CD8-positive, alpha-beta T cell (primary cell): ENCODE measurements at regions of chr12 and their contacts with region 1.

Region 1: DNA sequence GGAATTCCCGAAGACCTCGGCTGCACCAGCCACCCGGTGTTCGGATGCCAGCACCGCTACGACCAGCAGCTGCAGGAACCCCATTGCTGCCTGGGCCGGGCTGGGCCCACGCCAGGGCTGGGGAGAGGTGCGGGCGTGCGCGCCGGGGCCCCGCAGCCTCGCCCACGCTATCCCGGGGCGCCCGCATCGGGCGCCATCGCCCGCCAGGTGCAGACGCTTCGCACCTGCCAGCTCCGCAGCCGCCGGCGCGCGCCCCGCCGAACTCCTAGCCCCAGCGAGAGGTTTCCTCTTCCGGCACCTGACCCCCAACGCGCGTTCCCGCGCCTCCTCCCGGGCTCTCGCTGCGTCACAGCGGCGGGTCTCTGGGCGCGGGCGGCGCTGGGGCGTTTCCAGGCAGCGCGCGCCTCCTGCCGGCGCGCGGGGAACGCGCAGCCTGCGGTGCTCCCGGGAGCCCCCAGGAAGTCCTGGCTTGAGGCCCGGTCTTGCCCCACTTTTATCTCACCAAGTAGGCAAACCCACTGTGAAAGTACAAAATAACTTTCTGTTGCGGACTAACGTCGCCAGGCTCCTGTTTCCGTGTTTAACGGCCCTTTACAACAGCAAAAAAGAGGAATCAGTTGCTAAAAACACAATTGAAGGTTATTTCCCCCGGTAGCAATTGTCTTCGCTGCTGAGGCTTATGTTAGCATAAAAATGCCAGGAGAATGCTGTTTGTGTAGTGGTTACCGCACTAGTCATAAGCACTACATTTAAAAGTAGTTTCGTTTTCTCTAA is at the start of gene TM7SF3:
- DNase-seq: peak; percentile 92 to 98 (median 96)
- ATAC-seq: peak; percentile 89
- H3K4me3 ChIP-seq: peak within 1 kb of the TSS; percentile 87 to 93
- H3K4me3 Mint-ChIP-seq: peak within 1 kb of the TSS; percentile 93
- H3K27ac ChIP-seq: peak within 1 kb of the TSS; percentile 80 to 98
- H3K27ac Mint-ChIP-seq: peak within 1 kb of the TSS; percentile 92
- H3K4me1 ChIP-seq: peaks cover 25% of the 10 kb centered on the region
- H3K4me1 Mint-ChIP-seq: peaks cover 51% of the 10 kb centered on the region
- H3K27me3 ChIP-seq: no peaks in the 10 kb centered on the region
- H3K27me3 Mint-ChIP-seq: no peaks in the 10 kb centered on the region
- CTCF ChIP-seq: peak; percentile 98
- total RNA-seq, gene TM7SF3: 5.8 to 7.2 TPM

Region 2: DNA sequence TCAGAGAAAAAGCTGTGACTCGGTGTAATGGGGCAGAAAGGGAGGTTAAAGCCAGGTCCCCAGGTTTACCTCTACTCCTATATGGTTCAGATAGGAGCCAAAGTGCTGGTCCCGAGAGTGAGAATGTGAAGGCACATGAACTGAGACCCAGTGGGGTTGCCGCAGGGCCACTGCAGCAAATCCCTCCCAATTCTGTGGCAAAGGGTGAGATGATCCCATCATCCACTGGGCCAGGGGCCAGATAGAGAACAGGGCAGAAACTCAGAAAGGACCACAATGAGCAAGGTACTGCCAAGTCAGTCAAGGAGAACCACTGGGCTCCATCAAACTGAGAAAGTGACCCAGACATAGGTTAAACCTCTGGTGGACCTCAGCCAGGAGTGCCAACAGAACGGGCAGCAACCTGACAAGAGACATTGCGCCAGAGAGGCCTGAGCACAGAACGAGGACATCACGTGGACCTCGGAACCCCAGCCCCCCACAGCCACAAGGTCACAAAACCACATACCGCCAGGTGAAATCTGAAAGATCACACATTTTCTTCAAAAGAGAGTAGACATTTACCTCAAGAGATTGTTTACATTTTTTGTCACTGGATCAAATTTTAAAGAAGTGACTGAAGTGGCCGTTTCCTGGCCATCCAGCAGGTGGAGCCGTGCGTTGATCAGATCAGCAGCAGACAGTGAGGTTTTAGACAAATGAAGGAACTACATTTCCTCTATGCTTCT is 160.8 kb before region 1 on chr12:
- CTCF ChIA-PET with region 1: interaction called, 6 read pairs
- POLR2A ChIA-PET with region 1: no interaction called
- intact Hi-C with region 1: loop called (anchors 1 to 2 kb)
- DNase-seq: peak; percentile 55 to 83 (median 69)
- ATAC-seq: peak; percentile 98
- H3K4me3 ChIP-seq: no peak overlapping the region
- H3K4me3 Mint-ChIP-seq: no peak overlapping the region
- H3K27ac ChIP-seq: no peak overlapping the region
- H3K27ac Mint-ChIP-seq: peak overlapping the region; percentile 33
- H3K4me1 ChIP-seq: peaks cover 6% of the 10 kb centered on the region
- H3K4me1 Mint-ChIP-seq: no peaks in the 10 kb centered on the region
- H3K27me3 ChIP-seq: no peaks in the 10 kb centered on the region
- H3K27me3 Mint-ChIP-seq: peaks cover 4% of the 10 kb centered on the region
- CTCF ChIP-seq: peak; percentile 92

Region 3: DNA sequence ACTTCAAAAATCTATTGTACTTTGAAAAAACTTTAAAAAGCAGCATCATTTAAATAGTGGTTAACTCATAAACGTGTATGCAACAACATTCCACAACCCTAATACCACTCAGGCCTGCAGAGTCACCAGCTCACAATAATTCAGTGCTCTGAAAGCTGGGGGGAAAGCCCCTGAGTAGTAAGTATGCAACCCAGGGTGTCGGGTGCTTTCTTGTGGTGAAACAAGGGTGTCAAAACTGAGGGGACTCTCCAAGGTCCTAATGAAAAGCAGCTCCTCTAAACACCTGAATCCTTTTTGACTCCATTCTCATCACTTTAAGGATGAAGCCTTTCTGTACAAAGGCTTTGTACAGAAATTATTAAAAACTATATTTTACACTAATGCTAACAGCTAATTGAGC is 42.3 kb before region 1 on chr12:
- CTCF ChIA-PET with region 1: no interaction called
- POLR2A ChIA-PET with region 1: no interaction called
- intact Hi-C with region 1: loop called in 1 of 2 experiments (anchors 5 kb)
- DNase-seq: peak; percentile 13 to 90 (median 59)
- ATAC-seq: peak; percentile 98
- H3K4me3 ChIP-seq: no peak overlapping the region
- H3K4me3 Mint-ChIP-seq: peak overlapping the region; percentile 18
- H3K27ac ChIP-seq: no peak overlapping the region
- H3K27ac Mint-ChIP-seq: peak overlapping the region; percentile 45
- H3K4me1 ChIP-seq: peaks cover 16% of the 10 kb centered on the region
- H3K4me1 Mint-ChIP-seq: peaks cover 17% of the 10 kb centered on the region
- H3K27me3 ChIP-seq: no peaks in the 10 kb centered on the region
- H3K27me3 Mint-ChIP-seq: no peaks in the 10 kb centered on the region
- CTCF ChIP-seq: no peak

Region 4: DNA sequence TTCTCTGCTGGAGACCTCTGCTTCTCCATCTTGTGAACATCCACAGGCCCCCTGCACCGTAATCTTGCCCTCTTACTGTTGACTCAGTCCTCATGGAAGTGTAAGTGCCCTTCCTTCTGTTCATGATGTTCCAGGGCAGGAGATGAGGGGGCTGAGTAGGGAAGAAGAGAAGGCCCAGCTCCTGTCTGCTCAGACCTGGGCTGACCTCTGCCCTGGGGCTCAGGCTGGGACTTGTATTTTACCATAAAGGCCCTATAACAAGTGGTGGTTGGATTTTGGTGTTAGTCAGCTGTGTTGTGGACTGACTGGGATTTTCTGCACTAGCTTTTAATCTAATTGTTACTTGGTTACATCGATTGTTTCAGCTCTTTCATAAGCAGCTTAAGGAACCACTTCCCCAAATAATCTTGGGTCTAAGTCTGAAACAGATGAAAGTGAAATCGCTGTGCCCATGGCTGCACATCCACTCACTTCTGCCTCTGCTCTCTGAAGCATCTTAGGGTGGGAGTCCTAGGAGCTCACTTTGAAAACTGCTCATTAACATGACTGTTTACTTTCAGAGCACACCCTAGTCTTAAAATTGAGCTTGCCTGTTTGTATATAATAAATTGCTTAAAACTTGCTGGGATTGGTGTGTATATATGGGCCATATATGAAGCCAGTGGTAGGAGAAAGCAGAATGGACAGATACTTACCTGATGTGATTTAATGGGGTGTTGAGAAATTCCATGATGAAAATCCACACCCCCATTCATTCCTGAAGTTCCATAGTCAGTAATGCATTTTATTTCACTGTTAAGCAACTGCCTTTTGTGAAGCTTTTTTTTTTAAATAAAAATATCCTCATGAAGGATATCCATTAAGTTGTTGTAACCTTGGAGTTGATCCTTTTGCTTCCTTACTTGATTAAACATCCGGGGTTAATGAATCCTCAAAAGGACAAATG is 50.4 kb after region 1 on chr12:
- CTCF ChIA-PET with region 1: no interaction called
- POLR2A ChIA-PET with region 1: no interaction called
- intact Hi-C with region 1: no loop called
- DNase-seq: no peak
- ATAC-seq: no peak
- H3K4me3 ChIP-seq: no peak overlapping the region
- H3K4me3 Mint-ChIP-seq: no peak overlapping the region
- H3K27ac ChIP-seq: no peak overlapping the region
- H3K27ac Mint-ChIP-seq: no peak overlapping the region
- H3K4me1 ChIP-seq: no peaks in the 10 kb centered on the region
- H3K4me1 Mint-ChIP-seq: no peaks in the 10 kb centered on the region
- H3K27me3 ChIP-seq: no peaks in the 10 kb centered on the region
- H3K27me3 Mint-ChIP-seq: no peaks in the 10 kb centered on the region
- CTCF ChIP-seq: no peak

Region 5: GRCh38 chr12:27142101-27142721 is 127.9 kb after region 1 on chr12:
- CTCF ChIA-PET with region 1: interaction called, 9 read pairs
- POLR2A ChIA-PET with region 1: no interaction called
- intact Hi-C with region 1: loop called in 1 of 2 experiments (anchors 1 kb)
- DNase-seq: peak in 7 of 9 experiments; percentile 9 to 73 (median 28)
- ATAC-seq: peak; percentile 51
- H3K4me3 ChIP-seq: no peak overlapping the region
- H3K4me3 Mint-ChIP-seq: no peak overlapping the region
- H3K27ac ChIP-seq: no peak overlapping the region
- H3K27ac Mint-ChIP-seq: no peak overlapping the region
- H3K4me1 ChIP-seq: no peaks in the 10 kb centered on the region
- H3K4me1 Mint-ChIP-seq: peaks cover 6% of the 10 kb centered on the region
- H3K27me3 ChIP-seq: no peaks in the 10 kb centered on the region
- H3K27me3 Mint-ChIP-seq: no peaks in the 10 kb centered on the region
- CTCF ChIP-seq: peak; percentile 81

Region 6: DNA sequence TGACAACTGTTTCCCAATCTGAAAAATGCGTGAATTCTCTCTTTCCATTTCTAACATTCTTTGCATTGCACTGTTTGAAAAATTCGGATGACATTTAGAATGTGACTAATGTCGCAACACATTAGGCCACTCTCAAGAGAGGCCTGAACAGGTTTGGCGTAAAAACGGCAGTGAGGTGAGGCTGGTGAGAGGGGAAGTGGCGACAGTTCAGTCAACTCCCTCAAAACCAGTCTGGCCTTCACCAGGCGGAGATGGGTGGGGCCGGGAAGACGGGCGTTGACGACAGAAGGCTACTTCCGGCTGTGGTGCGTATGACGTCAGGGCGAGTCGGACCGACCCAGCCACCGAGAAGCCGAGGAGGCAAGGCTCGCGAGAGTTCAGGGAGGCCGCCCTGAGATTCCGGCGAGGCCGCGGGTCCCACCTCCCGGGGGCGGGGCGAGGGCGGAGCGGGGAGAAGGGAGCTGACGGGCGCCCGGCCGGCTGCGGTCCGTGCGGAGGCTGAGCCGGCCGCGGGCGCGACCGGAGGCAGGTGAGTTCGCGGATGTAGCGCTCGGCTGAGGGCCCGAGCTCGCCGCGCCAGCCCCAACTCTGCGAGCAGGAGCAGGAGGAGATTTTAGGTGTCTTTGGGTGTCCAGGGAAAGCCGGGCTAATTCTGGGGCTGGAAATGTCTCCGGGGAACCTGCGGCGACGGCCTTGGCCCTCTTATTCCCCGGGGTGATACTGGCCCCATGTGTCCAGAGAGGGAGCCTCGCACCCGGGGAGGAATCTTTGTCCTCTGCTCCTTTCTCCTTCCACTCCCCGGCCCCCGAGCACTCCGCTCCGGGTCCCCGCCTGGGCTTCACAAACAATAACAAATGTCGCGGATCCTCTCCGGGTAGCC is 229.8 kb after region 1 on chr12 and contains the start of gene STK38L:
- CTCF ChIA-PET with region 1: interaction called, 3 read pairs
- POLR2A ChIA-PET with region 1: no interaction called
- intact Hi-C with region 1: loop called (anchors 1 to 2 kb)
- DNase-seq: peak; percentile 90 to 99 (median 98)
- ATAC-seq: peak; percentile 95
- H3K4me3 ChIP-seq: peak within 1 kb of the TSS; percentile 84 to 89
- H3K4me3 Mint-ChIP-seq: peak within 1 kb of the TSS; percentile 96
- H3K27ac ChIP-seq: peak within 1 kb of the TSS; percentile 76
- H3K27ac Mint-ChIP-seq: peak within 1 kb of the TSS; percentile 96
- H3K4me1 ChIP-seq: peaks cover 14% of the 10 kb centered on the region
- H3K4me1 Mint-ChIP-seq: peaks cover 52% of the 10 kb centered on the region
- H3K27me3 ChIP-seq: no peaks in the 10 kb centered on the region
- H3K27me3 Mint-ChIP-seq: no peaks in the 10 kb centered on the region
- CTCF ChIP-seq: no peak
- total RNA-seq, gene STK38L: 27.0 to 28.6 TPM

Region 7: DNA sequence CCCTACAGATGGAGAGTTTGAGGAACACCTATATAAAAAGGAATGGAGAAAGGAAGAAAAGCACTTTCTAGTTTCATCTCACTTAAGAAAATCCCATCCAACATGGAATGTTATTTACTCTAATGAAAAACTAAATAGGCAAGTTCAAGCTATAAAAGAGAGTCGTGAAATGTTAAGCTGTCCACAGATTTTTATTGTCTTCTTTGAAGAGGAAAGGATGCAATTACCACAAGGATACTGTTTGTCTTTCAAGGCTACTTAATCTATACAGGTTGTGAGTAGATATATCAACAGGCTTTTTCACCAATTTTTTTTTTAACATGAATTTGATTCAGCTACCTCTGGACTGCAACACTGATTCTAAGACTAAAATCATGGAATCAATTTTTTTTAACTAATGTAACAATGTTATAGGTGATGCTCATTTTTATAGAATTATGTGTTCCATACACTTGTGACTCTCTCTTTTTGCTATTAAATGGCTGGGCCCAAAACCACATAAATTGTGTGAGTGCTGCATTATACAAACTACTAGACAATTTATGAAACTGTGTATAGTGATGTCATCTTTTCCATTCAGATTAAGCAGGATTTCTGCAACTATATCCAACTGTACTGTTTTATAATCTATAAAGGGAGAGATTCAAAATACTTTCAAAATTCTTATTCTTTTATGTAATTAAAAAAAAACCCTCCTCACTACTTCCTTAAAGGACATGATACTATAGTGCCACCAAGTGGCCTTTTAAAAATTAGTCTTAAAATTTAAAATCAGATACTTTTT is 291.6 kb after region 1 on chr12:
- CTCF ChIA-PET with region 1: interaction called, 29 read pairs
- POLR2A ChIA-PET with region 1: interaction called, 3 read pairs
- intact Hi-C with region 1: loop called (anchors 1 kb)
- DNase-seq: peak in 2 of 9 experiments; percentile 46 to 62
- ATAC-seq: peak; percentile 34
- H3K4me3 ChIP-seq: no peak overlapping the region
- H3K4me3 Mint-ChIP-seq: no peak overlapping the region
- H3K27ac ChIP-seq: no peak overlapping the region
- H3K27ac Mint-ChIP-seq: no peak overlapping the region
- H3K4me1 ChIP-seq: no peaks in the 10 kb centered on the region
- H3K4me1 Mint-ChIP-seq: no peaks in the 10 kb centered on the region
- H3K27me3 ChIP-seq: no peaks in the 10 kb centered on the region
- H3K27me3 Mint-ChIP-seq: no peaks in the 10 kb centered on the region
- CTCF ChIP-seq: peak; percentile 89

Region 8: GRCh38 chr12:27710592-27711316 is 696.5 kb after region 1 on chr12 and contains the start of gene MRPS35:
- CTCF ChIA-PET with region 1: no interaction called
- POLR2A ChIA-PET with region 1: no interaction called
- intact Hi-C with region 1: loop called (anchors 2 to 5 kb)
- DNase-seq: peak; percentile 83 to 95 (median 90)
- ATAC-seq: peak; percentile 96
- H3K4me3 ChIP-seq: peak within 1 kb of the TSS; percentile 86 to 89
- H3K4me3 Mint-ChIP-seq: peak within 1 kb of the TSS; percentile 96
- H3K27ac ChIP-seq: peak within 1 kb of the TSS; percentile 68 to 71
- H3K27ac Mint-ChIP-seq: peak within 1 kb of the TSS; percentile 95
- H3K4me1 ChIP-seq: peaks cover 11% of the 10 kb centered on the region
- H3K4me1 Mint-ChIP-seq: peaks cover 36% of the 10 kb centered on the region
- H3K27me3 ChIP-seq: no peaks in the 10 kb centered on the region
- H3K27me3 Mint-ChIP-seq: peaks cover 6% of the 10 kb centered on the region
- CTCF ChIP-seq: no peak
- total RNA-seq, gene MRPS35: 30.0 to 30.8 TPM